ENCODE measurements at regions of chr7 and their contacts with region 1.

Region 1: GRCh38 chr7:78161781-78162180 is 363.2 kb downstream of the PHTF2 start:
- DNase-seq: no peak
- H3K4me3 ChIP-seq: no peak overlapping the region
- H3K27ac ChIP-seq: no peak overlapping the region
- H3K4me1 ChIP-seq: no peaks in the 10 kb centered on the region
- H3K27me3 ChIP-seq: peaks cover 16% of the 10 kb centered on the region; the same call in 1 of the 2 replicates
- CTCF ChIP-seq: no peak

Region 2: GRCh38 chr7:78125884-78126283 is 35.9 kb before region 1 on chr7:
- CTCF ChIA-PET with region 1: interaction called, 11 read pairs
- POLR2A ChIA-PET with region 1: no interaction called
- intact Hi-C with region 1: no loop called
- DNase-seq: no peak
- H3K4me3 ChIP-seq: no peak overlapping the region
- H3K27ac ChIP-seq: no peak overlapping the region
- H3K4me1 ChIP-seq: no peaks in the 10 kb centered on the region
- H3K27me3 ChIP-seq: peaks cover 5% of the 10 kb centered on the region; the same call in 1 of the 2 replicates
- CTCF ChIP-seq: no peak